ENCODE measurements at regions of chr22 and their contacts with region 1.

Region 1: DNA sequence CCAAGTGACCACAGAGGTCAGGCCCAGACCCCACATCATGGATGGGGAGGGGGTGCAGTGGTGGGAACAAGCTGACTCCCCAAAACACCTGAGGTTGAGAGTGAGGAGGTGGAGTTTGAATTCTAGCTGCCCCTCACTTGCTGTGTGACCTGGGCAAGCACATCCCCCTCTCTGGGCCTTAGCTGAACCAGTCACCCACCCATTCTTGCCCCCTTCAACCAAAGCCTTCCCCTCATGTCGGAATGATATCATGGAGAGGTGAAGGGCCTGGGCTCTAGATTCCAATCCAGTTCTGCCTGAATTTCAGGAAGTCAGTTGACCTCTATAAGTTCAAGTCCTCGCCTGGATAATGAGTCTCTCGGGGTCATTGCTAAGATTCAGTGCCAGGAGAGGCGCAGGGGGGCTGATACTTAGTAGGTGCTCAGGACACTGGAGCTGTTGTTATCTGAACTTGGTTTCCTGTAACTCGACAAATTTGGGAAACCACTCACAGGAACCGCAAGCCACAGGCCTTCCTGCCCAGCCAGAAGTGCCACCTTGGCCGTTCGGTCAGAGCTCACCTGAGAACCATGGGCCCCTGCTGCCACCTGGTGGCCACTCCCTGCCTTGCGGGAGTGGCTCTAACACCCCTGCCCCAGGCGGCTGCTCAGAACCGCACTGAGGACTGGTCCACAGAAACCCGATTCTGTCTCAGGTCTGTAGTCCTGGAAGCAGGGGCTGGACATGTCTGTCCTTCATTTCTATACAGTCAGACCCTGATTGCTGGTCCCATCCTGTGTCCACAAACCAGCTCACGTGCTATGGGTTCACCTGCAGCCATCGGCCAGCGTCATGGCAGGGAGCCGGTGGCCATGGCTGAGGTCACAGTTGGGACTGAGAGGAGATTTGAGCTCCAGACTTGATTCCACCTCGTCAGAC is 6.9 kb downstream of the CDC42EP1 start:
- DNase-seq: peak; percentile 87 to 91 (median 89)
- H3K4me3 ChIP-seq: peak overlapping the region; percentile 6 to 15
- H3K4me3 Mint-ChIP-seq: peak overlapping the region; percentile 58 to 85 (median 70)
- H3K27ac ChIP-seq: no peak overlapping the region
- H3K27ac Mint-ChIP-seq: peak overlapping the region; percentile 8 to 81 (median 57)
- H3K4me1 ChIP-seq: peaks cover 23% of the 10 kb centered on the region
- H3K4me1 Mint-ChIP-seq: peaks cover 11 to 36% (median 25%) of the 10 kb centered on the region in 4 donors
- H3K27me3 ChIP-seq: peaks cover 11% of the 10 kb centered on the region
- H3K27me3 Mint-ChIP-seq: peaks cover 14 to 24% of the 10 kb centered on the region in 2 donors

Region 2: GRCh38 chr22:37362621-37363020 is 204.5 kb before region 1 on chr22:
- CTCF ChIA-PET with region 1: no interaction called
- POLR2A ChIA-PET with region 1: no interaction called
- intact Hi-C with region 1: no loop called
- DNase-seq: no peak
- H3K4me3 ChIP-seq: no peak overlapping the region
- H3K4me3 Mint-ChIP-seq: no peak overlapping the region
- H3K27ac ChIP-seq: no peak overlapping the region
- H3K27ac Mint-ChIP-seq: no peak overlapping the region
- H3K4me1 ChIP-seq: no peaks in the 10 kb centered on the region
- H3K4me1 Mint-ChIP-seq: no peaks in the 10 kb centered on the region
- H3K27me3 ChIP-seq: no peaks in the 10 kb centered on the region
- H3K27me3 Mint-ChIP-seq: peaks cover 0 to 5% of the 10 kb centered on the region in 2 donors

Region 3: DNA sequence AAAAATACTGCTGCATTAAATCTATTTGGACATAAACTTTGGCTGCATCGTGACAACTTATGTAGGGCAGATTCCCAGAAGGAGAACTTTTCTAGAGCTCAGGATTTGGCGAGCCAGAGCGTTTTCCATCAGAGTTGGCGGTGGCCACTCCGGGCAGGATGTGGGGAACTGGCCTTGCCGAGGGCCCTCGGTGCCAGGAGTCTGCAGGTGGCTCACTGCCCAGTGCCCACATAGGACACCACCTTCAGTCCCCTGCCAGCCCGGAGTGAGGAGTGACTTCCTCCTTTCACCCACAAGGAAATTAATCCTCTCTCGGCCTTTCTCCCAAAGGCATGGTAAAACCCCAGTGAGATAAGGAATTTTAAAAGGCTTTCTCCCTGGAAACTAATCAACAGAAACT is 14.3 kb after region 1 on chr22:
- CTCF ChIA-PET with region 1: interaction called, 14 read pairs
- POLR2A ChIA-PET with region 1: no interaction called
- intact Hi-C with region 1: no loop called
- DNase-seq: no peak
- H3K4me3 ChIP-seq: no peak overlapping the region
- H3K4me3 Mint-ChIP-seq: no peak overlapping the region
- H3K27ac ChIP-seq: no peak overlapping the region
- H3K27ac Mint-ChIP-seq: no peak overlapping the region
- H3K4me1 ChIP-seq: peaks cover 12% of the 10 kb centered on the region
- H3K4me1 Mint-ChIP-seq: peaks cover 5 to 15% (median 10%) of the 10 kb centered on the region in 4 donors
- H3K27me3 ChIP-seq: no peaks in the 10 kb centered on the region
- H3K27me3 Mint-ChIP-seq: peaks cover 3 to 6% of the 10 kb centered on the region in 2 donors

Region 4: GRCh38 chr22:37588546-37589215 is 21.5 kb after region 1 on chr22:
- CTCF ChIA-PET with region 1: interaction called, 90 read pairs
- POLR2A ChIA-PET with region 1: interaction called, 21 read pairs
- intact Hi-C with region 1: loop called (anchors 1 kb)
- DNase-seq: no peak
- H3K4me3 ChIP-seq: no peak overlapping the region
- H3K4me3 Mint-ChIP-seq: no peak overlapping the region
- H3K27ac ChIP-seq: no peak overlapping the region
- H3K27ac Mint-ChIP-seq: peak overlapping the region in 1 of 7 donors; percentile 55
- H3K4me1 ChIP-seq: peaks cover 6% of the 10 kb centered on the region
- H3K4me1 Mint-ChIP-seq: peaks cover 9 to 14% (median 11%) of the 10 kb centered on the region in 4 donors
- H3K27me3 ChIP-seq: no peaks in the 10 kb centered on the region
- H3K27me3 Mint-ChIP-seq: peaks cover 11 to 12% of the 10 kb centered on the region in 2 donors